Head of caudate nucleus (tissue), 42 donors: ENCODE measurements at regions of chr7 and their contacts with region 1.

Region 1: DNA sequence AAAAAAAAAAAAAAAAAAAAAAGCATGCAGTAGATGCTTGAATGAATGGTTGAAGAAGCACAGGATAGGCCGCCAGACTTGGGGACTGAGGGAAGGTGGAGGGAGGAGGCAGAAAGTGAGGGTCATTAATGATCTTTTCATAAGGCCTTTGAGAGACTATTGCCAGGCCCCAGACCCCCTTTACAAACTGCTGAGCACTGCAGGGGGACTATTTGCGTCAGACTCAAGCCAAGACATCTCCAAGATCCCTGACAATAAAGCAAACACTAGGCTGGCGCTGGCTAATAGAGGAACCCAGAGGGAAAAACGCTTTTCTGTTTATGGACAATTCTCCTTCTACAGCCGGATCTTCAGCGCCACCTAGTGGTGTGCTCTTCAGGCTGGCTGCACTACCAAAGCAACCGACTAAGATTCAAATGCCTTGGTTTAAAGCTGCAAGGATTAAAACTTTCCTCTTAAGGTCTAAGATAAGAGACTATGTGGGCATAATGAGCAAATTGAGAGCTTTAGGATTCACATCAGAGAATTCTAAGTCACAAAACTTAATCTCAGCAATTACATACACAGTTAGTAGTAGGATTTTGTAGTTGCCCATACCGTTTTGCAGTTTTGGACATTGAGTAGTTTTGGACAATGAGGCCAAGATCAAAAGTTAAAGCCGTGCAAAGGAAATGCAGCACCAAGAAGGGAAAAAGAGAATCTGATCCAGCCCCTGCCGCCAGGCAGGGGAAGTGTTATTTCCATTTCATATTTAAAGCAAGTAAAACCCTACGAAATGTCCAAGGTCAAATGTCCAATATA is 17.9 kb upstream of the AGK start:
- DNase-seq: peak; percentile 40 to 91 (median 78)

Region 2: DNA sequence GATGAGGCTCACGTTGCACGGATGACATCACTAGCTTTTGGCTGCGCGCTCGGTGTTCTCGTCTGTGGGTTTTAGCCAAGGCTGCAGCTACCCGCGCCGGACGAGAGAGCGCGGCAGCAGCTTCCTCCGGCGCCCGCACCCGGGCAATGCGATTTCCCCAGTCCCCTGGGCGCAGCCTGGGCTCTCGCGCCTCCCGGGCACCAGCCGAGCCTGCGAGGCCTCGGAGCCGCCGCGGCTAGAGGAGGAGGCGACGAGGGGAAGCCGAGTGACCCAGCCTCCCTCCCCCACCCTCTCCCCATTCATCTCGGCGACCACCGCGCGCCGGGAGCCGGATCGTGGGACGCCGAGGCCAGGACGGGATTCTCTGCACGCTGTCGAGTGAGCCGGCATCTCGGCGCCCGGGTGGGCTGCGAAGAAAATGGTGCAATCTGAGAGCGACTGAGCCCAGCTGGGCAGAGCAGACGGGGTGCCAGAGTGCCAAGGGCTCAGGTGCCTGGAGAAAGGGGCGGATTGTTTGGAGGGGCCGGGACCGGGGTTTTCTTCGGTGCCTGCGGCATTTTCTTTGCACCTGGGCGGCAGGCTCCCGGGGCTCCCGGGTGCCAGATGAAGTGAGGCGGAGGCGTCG is 460.7 kb before region 1 on chr7:
- intact Hi-C with region 1: loop called (anchors 10 kb)
- DNase-seq: peak; percentile 69 to 95 (median 84)

Region 3: DNA sequence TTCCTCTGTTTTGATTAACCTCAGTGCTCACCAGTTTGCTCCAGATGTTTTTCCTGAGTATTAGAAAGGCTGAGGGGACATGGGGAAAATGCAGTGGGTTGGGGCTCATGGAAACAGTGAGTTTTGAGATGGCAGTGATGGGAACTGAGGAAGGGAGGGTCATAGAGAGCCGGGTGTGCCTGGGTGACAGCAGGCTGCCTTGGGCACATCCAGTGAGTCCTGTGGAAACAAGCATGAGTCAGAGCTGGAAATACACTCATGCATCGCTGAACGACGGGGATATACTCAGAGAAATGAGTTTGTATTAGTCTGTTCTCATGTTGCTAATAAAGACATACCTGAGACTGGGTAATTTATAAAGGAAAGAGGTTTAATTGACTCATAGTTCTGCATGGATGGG is 257.3 kb before region 1 on chr7:
- intact Hi-C with region 1: loop called (anchors 10 kb)
- DNase-seq: peak in 8 of 42 donors; percentile 12 to 67 (median 44)